Naive thymus-derived CD4-positive, alpha-beta T cell (primary cell): ENCODE measurements at regions of chr7 and their contacts with region 1.

Region 1: DNA sequence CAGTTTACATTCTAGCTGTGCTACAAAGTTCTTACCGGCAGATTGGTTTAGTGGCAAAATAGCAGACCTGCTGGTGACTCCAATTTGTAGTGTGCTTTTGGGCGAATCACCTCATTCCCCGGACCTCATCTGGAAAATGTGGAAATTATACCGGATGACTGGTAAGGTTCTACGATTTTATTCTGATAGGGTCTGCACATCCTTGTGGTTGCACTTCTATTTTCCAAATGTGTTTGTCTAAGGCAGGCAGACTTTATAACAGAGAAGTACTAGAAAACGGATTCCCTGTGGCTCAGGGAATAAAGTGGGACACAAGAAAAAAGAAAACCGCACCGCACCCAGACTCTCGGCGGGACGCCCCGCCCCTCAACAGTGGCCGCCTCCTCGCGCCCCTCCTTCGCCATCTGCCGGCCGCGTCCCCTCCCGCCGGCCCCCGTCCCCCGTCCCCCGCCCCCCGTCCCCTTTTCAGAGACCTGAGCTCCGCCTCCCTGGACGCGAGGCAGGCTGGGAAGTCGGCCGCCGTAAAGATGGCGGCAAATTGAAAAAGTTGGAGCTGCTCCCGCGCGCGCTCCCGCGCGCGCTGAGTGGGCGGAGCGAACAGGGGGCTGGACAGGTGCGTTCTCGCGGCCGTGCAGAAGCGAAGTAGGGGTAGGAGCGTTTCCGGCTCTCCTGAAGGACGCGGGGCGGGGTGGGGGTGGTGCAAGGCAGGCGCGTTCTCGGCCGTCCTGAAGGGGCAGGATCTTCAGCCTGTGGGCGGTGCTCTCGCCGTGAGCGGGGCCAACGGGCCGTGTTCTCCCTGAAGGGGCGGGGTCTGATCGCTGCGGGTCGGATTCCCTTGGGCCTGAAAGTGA is 531 bp upstream of the CCM2 start:
- DNase-seq: peak; percentile 92 to 99 (median 98)
- ATAC-seq: peak; percentile 93
- H3K4me3 ChIP-seq: peak overlapping the region; percentile 83
- H3K4me3 Mint-ChIP-seq: peak overlapping the region; percentile 85 to 100 (median 96)
- H3K27ac ChIP-seq: peak overlapping the region; percentile 80
- H3K27ac Mint-ChIP-seq: peak overlapping the region; percentile 82 to 99 (median 96)
- H3K4me1 ChIP-seq: peaks cover 18 to 34% of the 10 kb centered on the region in 2 donors
- H3K4me1 Mint-ChIP-seq: peaks cover 19 to 59% (median 49%) of the 10 kb centered on the region in 7 donors
- H3K27me3 ChIP-seq: no peaks in the 10 kb centered on the region
- H3K27me3 Mint-ChIP-seq: no peaks in the 10 kb centered on the region

Region 2: DNA sequence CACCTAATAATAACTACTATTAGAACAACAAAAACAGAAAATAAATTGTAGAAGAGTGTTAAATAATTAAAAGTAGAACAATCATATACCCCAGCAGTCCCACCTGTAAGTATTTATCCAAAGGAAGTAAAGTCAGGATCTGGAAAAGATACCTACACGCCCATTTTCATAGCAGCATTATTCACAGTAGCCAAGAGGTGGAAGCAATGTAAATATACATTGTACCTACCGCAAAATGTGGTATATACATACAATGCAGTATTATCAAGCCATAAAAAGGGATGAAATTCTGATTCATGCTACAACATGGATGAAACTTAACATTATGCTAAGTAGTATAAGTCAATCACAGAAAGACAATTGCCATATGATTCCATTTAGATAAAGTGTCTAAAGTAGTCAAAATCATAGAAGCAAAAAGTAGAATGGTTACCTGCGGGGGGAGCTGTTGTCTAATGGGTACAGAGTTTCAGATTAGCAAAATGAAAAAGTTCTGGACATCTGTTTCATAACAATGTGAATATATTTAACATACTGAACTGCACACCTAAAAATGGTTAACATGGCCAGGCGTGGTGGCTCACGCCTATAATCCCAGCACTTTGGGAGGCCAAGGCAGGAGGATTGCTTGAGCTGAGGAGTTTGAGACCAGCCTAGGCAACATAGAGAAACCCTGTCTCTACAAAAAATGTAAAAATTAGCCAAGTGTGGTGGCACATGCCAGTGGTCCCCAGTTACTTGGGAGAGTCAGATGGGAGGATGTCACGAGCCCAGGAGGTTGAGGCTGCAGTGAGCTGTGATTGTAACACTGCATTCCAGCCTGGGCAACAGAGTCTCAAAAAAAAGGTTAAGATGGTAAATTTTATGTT is 411.4 kb before region 1 on chr7:
- CTCF ChIA-PET with region 1: no interaction called
- POLR2A ChIA-PET with region 1: no interaction called
- intact Hi-C with region 1: loop called (anchors 2 kb)
- DNase-seq: peak in 7 of 9 donors; percentile 35 to 63 (median 60)
- ATAC-seq: peak; percentile 90
- H3K4me3 ChIP-seq: no peak overlapping the region
- H3K4me3 Mint-ChIP-seq: no peak overlapping the region
- H3K27ac ChIP-seq: no peak overlapping the region
- H3K27ac Mint-ChIP-seq: peak overlapping the region in 3 of 9 donors; percentile 6 to 71 (median 25)
- H3K4me1 ChIP-seq: peaks cover 0 to 4% of the 10 kb centered on the region in 2 donors
- H3K4me1 Mint-ChIP-seq: peaks cover 0 to 18% (median 6%) of the 10 kb centered on the region in 7 donors
- H3K27me3 ChIP-seq: no peaks in the 10 kb centered on the region
- H3K27me3 Mint-ChIP-seq: peaks cover 0 to 9% (median 0%) of the 10 kb centered on the region in 5 donors

Region 3: DNA sequence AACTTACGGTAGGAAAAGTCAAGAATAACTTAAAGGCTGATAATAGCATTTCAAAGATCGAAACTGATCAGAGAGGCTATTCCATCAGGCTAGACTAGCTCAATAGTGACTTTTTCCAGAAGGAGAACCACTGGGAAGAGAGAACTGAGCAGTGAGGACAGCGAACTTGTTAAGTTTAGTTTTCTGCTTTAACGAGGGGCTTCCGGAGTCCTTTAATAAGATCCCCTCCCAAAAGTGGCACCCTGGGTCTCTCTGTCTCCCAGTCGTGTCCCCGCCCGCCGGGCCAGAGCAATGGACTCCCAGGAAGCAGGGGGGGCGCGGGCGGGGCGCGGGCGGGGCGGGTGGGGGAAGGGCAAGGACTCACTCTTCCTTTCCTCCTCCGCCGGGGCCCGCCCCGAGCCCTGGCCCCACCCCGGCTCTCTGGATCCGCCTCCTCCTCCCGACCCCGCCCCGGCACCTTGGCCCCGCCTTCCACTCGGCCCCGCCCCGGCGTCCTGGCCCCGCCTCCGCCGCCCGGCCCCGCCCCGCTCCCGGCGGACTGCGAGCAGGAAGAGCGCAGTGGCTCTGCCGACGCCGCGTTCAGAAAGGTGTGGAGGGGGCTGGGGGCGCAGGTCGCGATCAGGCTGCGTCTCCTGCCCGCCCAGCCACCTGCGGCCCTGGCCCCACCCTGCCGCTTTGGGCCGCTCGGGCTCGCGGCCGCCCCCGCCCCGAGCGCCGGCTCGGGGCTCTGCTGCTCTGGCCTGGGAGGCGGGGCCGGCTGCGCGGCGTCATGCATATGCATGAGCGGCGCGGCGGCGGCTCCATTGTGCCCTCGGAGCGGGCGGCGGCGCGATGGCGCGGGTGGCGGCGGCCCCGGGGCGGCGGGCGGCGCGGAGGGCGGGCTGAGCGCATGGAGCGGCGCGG is 251.2 kb before region 1 on chr7 and contains the start of gene ZMIZ2:
- CTCF ChIA-PET with region 1: no interaction called
- POLR2A ChIA-PET with region 1: no interaction called
- intact Hi-C with region 1: loop called (anchors 1 to 2 kb)
- DNase-seq: peak; percentile 87 to 99 (median 93)
- ATAC-seq: peak; percentile 94
- H3K4me3 ChIP-seq: peak within 1 kb of the TSS; percentile 64
- H3K4me3 Mint-ChIP-seq: peak within 1 kb of the TSS; percentile 77 to 92 (median 88)
- H3K27ac ChIP-seq: peak within 1 kb of the TSS; percentile 98
- H3K27ac Mint-ChIP-seq: peak within 1 kb of the TSS; percentile 81 to 98 (median 92)
- H3K4me1 ChIP-seq: peaks cover 21 to 22% of the 10 kb centered on the region in 2 donors
- H3K4me1 Mint-ChIP-seq: peaks cover 22 to 63% (median 45%) of the 10 kb centered on the region in 7 donors
- H3K27me3 ChIP-seq: no peaks in the 10 kb centered on the region
- H3K27me3 Mint-ChIP-seq: no peaks in the 10 kb centered on the region
- total RNA-seq, gene ZMIZ2: 108 to 187 (median 144) TPM

Region 4: DNA sequence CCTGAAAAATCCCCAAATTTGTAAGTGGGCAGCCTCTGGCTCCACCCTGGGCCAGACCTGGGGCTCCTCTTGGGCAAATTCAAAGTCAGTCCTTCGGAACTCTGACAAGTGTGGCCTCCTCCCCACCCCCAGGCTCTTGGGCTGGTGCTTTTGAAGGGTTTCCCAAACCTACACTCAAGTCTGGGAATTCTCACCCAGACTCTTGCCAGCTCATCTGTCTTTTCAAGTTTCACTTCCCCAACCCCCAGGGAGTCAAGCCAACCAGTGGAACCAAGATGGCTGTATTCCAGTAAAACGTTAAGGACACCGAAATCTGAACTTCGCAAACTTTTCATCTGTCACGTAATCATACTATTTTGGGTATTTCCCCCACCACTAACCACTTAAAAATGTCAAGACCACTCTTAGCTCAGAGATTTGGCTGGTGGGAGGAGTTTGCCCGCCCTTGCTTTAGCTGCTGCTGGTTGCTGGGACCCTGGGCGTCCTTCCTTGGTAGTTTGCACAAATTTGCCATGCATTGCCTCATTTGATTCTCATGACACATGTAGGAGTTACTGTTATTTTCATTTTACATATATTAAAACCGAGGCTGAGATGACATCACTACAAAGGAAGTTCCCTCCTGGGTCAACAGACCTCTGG is 19.0 kb before region 1 on chr7:
- CTCF ChIA-PET with region 1: interaction called, 8 read pairs
- POLR2A ChIA-PET with region 1: interaction called, 309 read pairs
- intact Hi-C with region 1: loop called (anchors 1 kb)
- DNase-seq: peak in 2 of 9 donors; percentile 63 to 69
- ATAC-seq: peak; percentile 38
- H3K4me3 ChIP-seq: peak overlapping the region; percentile 78
- H3K4me3 Mint-ChIP-seq: peak overlapping the region; percentile 39 to 100 (median 70)
- H3K27ac ChIP-seq: peak overlapping the region; percentile 83
- H3K27ac Mint-ChIP-seq: peak overlapping the region; percentile 85 to 99 (median 96)
- H3K4me1 ChIP-seq: peaks cover 60 to 63% of the 10 kb centered on the region in 2 donors
- H3K4me1 Mint-ChIP-seq: peaks cover 54 to 96% (median 68%) of the 10 kb centered on the region in 7 donors
- H3K27me3 ChIP-seq: no peaks in the 10 kb centered on the region
- H3K27me3 Mint-ChIP-seq: no peaks in the 10 kb centered on the region

Region 5: GRCh38 chr7:45013465-45013967 is 14.0 kb after region 1 on chr7:
- CTCF ChIA-PET with region 1: interaction called, 3 read pairs
- POLR2A ChIA-PET with region 1: interaction called, 47 read pairs
- intact Hi-C with region 1: no loop called
- DNase-seq: peak in 7 of 9 donors; percentile 39 to 69 (median 63)
- ATAC-seq: peak; percentile 88
- H3K4me3 ChIP-seq: no peak overlapping the region
- H3K4me3 Mint-ChIP-seq: peak overlapping the region in 7 of 10 donors; percentile 1 to 53 (median 20)
- H3K27ac ChIP-seq: peak overlapping the region; percentile 8
- H3K27ac Mint-ChIP-seq: peak overlapping the region; percentile 28 to 94 (median 78)
- H3K4me1 ChIP-seq: peaks cover 6 to 11% of the 10 kb centered on the region in 2 donors
- H3K4me1 Mint-ChIP-seq: peaks cover 21 to 57% (median 51%) of the 10 kb centered on the region in 7 donors
- H3K27me3 ChIP-seq: no peaks in the 10 kb centered on the region
- H3K27me3 Mint-ChIP-seq: no peaks in the 10 kb centered on the region

Region 6: DNA sequence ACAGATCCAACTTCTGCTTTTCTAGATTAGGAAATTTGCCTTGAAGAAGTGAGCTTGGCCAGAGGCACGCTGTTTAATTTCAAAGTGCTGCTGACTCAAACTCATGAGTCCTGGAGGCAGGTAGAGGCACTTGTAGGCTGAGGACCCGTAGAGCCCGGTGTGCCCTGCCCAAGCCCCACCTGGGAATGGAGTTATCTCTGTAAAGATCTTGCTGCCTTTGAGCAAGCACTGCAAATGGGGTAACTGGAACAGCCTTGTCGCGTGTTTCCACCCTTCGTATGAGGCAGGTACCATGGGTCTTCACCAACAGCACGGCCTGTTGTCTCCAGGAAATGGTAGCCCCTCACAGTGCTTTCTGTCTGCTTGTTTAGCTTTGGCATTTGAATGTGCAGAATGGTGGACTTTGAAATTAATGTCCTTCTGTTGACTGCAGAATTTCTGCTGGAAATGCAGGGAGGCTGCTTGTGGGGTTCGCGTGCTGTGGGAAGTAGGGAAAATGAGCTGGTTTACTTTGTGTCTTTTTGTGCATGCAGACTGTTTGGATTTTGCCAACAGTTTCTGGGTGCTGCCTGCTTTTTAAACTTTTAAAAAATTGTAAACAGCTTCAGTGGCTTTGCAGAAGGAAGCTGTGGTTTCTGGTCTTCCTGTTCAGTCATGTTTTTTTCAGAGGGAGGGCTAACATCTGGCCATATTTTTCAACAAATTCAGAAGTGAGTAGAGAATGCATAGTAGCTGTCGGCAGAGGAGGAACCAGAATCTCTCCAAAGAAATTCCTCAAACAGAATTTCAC is 27.7 kb after region 1 on chr7:
- CTCF ChIA-PET with region 1: interaction called, 17 read pairs
- POLR2A ChIA-PET with region 1: interaction called, 348 read pairs
- intact Hi-C with region 1: loop called (anchors 1 kb)
- DNase-seq: peak in 7 of 9 donors; percentile 42 to 79 (median 71)
- ATAC-seq: peak; percentile 81
- H3K4me3 ChIP-seq: peak overlapping the region; percentile 87
- H3K4me3 Mint-ChIP-seq: peak overlapping the region; percentile 89 to 98 (median 95)
- H3K27ac ChIP-seq: peak overlapping the region; percentile 86
- H3K27ac Mint-ChIP-seq: peak overlapping the region; percentile 80 to 97 (median 93)
- H3K4me1 ChIP-seq: peaks cover 34 to 57% of the 10 kb centered on the region in 2 donors
- H3K4me1 Mint-ChIP-seq: peaks cover 44 to 70% (median 62%) of the 10 kb centered on the region in 7 donors
- H3K27me3 ChIP-seq: no peaks in the 10 kb centered on the region
- H3K27me3 Mint-ChIP-seq: no peaks in the 10 kb centered on the region

Region 7: GRCh38 chr7:45111298-45112223 is 112.1 kb after region 1 on chr7 and contains the start of gene TBRG4:
- CTCF ChIA-PET with region 1: no interaction called
- POLR2A ChIA-PET with region 1: interaction called, 37 read pairs
- intact Hi-C with region 1: loop called (anchors 1 kb)
- DNase-seq: peak; percentile 88 to 96 (median 94)
- ATAC-seq: peak; percentile 94
- H3K4me3 ChIP-seq: peak within 1 kb of the TSS; percentile 80
- H3K4me3 Mint-ChIP-seq: peak within 1 kb of the TSS; percentile 93 to 100 (median 96)
- H3K27ac ChIP-seq: peak within 1 kb of the TSS; percentile 98
- H3K27ac Mint-ChIP-seq: peak within 1 kb of the TSS; percentile 98 to 100 (median 99)
- H3K4me1 ChIP-seq: peaks cover 17 to 45% of the 10 kb centered on the region in 2 donors
- H3K4me1 Mint-ChIP-seq: peaks cover 30 to 59% (median 50%) of the 10 kb centered on the region in 7 donors
- H3K27me3 ChIP-seq: no peaks in the 10 kb centered on the region
- H3K27me3 Mint-ChIP-seq: peaks cover 0 to 31% (median 0%) of the 10 kb centered on the region in 5 donors
- total RNA-seq, gene TBRG4: 93.7 to 143 (median 107) TPM